Transverse colon (tissue), 4 donors: ENCODE measurements at regions of chr20 and their contacts with region 1.

Region 1: GRCh38 chr20:4813863-4814695 is 92.4 kb downstream of the PRND start:
- DNase-seq: peak; percentile 43
- H3K4me3 ChIP-seq: peak overlapping the region in 1 of 4 donors; percentile 27
- H3K27ac ChIP-seq: peak overlapping the region; percentile 75 to 85 (median 82)
- H3K4me1 ChIP-seq: peaks cover 0 to 37% (median 6%) of the 10 kb centered on the region in 4 donors
- H3K27me3 ChIP-seq: no peaks in the 10 kb centered on the region
- CTCF ChIP-seq: no peak
- EP300 ChIP-seq: no peak
- POLR2A ChIP-seq: peak; percentile 44

Region 2: GRCh38 chr20:4766631-4767030 is 47.4 kb before region 1 on chr20:
- in situ Hi-C with region 1: no loop called
- intact Hi-C with region 1: no loop called
- DNase-seq: no peak
- H3K4me3 ChIP-seq: no peak overlapping the region
- H3K27ac ChIP-seq: no peak overlapping the region
- H3K4me1 ChIP-seq: no peaks in the 10 kb centered on the region
- H3K27me3 ChIP-seq: no peaks in the 10 kb centered on the region
- CTCF ChIP-seq: no peak
- EP300 ChIP-seq: no peak
- POLR2A ChIP-seq: no peak

Region 3: GRCh38 chr20:4862661-4863060 is 48.6 kb after region 1 on chr20:
- in situ Hi-C with region 1: no loop called
- intact Hi-C with region 1: loop called (anchors 1 kb)
- DNase-seq: no peak
- H3K4me3 ChIP-seq: no peak overlapping the region
- H3K27ac ChIP-seq: no peak overlapping the region
- H3K4me1 ChIP-seq: no peaks in the 10 kb centered on the region
- H3K27me3 ChIP-seq: no peaks in the 10 kb centered on the region
- CTCF ChIP-seq: no peak
- EP300 ChIP-seq: no peak
- POLR2A ChIP-seq: no peak